ENCODE measurements at regions of chr16 and their contacts with region 1.

Region 1: DNA sequence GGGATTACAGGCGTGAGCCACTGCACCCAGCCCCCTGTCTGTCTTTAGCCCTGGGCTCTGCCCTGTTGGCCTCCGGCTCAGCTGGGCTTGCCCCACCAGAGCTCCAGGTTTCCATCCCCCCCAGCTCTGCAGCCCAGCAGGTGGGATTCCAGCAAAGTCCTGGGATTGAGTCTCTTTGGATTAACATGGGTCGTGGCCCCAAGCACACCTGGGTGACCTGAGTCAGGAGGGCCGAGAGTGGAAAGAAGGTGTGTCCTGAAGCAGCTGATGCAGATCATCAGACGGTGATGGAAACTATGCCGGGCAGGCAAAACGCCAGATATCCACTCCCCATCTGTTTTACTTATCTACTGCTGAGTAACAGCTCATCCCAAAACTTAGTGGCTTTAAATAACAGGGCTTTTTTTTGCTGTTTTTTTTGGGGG is 72.5 kb downstream of the KNOP1 start:
- DNase-seq: peak; percentile 71 to 77
- ATAC-seq: peak; percentile 74 to 91 (median 82)
- H3K4me3 ChIP-seq: peak overlapping the region in 9 of 10 donors; percentile 4 to 38 (median 31)
- H3K27ac ChIP-seq: peak overlapping the region; percentile 40 to 90 (median 77)
- H3K4me1 ChIP-seq: peaks cover 5 to 37% (median 14%) of the 10 kb centered on the region in 9 donors
- H3K27me3 ChIP-seq: no peaks in the 10 kb centered on the region
- CTCF ChIP-seq: no peak

Region 2: DNA sequence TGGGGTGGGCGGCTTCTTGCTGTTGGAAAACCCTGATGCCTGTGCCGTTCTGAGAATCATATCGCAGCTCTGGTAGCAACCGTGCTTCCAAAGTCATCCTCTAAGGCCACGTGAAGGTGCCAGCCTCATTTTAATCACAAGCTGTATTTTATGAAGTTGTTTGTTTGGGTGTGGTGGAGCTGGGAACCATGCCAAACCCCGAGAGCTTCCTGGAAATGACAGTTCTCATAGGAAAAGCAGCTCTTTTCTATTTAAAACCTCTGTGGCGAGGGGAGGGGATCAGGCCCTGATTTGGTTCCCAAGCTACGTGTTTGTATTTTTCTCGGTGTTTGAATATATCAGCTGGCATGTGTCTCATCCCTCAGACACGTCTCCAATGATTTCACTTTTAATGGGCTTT is 50.8 kb after region 1 on chr16:
- intact Hi-C with region 1: loop called in 2 of 10 experiments (anchors 5 to 10 kb)
- DNase-seq: peak; percentile 71 to 92
- ATAC-seq: peak; percentile 56 to 78 (median 68)
- H3K4me3 ChIP-seq: peak overlapping the region in 1 of 10 donors; percentile 7
- H3K27ac ChIP-seq: peak overlapping the region; percentile 69 to 93 (median 84)
- H3K4me1 ChIP-seq: peaks cover 8 to 64% (median 55%) of the 10 kb centered on the region in 9 donors
- H3K27me3 ChIP-seq: no peaks in the 10 kb centered on the region
- CTCF ChIP-seq: no peak

Measured in heart right ventricle (tissue), 16 donors.